ENCODE measurements at regions of chr15 and their contacts with region 1.

Region 1: GRCh38 chr15:44215594-44215993 is 20.5 kb upstream of the FRMD5 start:
- DNase-seq: peak; percentile 94
- H3K4me3 ChIP-seq: no peak overlapping the region
- H3K27ac ChIP-seq: no peak overlapping the region
- H3K4me1 ChIP-seq: peaks cover 17% of the 10 kb centered on the region
- H3K27me3 ChIP-seq: no peaks in the 10 kb centered on the region
- CTCF ChIP-seq: no peak

Region 2: DNA sequence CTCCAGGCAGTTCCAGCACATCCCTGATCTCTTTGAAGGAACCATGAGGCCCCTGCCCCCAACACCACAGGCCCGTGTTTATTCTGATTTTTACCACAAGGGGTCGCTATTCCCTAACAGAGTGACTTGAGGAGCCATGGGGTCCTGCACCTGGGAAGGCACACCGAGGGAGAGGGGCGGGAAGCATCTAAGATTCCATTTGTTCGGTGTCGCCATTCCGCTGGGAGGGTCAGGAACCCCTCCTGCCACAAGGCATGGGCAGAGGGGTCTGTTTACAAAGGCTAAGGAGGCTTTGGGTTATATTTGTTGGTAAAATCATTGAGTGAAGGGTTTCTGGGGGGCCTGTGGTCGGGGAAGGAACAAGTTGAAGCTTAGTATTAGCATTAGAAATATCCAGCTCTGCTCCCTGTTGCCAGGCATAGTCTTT is 311.7 kb before region 1 on chr15:
- CTCF ChIA-PET with region 1: no interaction called
- dilution Hi-C with region 1: loop called (anchors 5 kb)
- in situ Hi-C with region 1: loop called (anchors 5 to 10 kb)
- intact Hi-C with region 1: loop called (anchors 1 kb)
- DNase-seq: peak; percentile 36
- H3K4me3 ChIP-seq: no peak overlapping the region
- H3K27ac ChIP-seq: no peak overlapping the region
- H3K4me1 ChIP-seq: no peaks in the 10 kb centered on the region
- H3K27me3 ChIP-seq: no peaks in the 10 kb centered on the region
- CTCF ChIP-seq: peak; percentile 67 to 84

Region 3: DNA sequence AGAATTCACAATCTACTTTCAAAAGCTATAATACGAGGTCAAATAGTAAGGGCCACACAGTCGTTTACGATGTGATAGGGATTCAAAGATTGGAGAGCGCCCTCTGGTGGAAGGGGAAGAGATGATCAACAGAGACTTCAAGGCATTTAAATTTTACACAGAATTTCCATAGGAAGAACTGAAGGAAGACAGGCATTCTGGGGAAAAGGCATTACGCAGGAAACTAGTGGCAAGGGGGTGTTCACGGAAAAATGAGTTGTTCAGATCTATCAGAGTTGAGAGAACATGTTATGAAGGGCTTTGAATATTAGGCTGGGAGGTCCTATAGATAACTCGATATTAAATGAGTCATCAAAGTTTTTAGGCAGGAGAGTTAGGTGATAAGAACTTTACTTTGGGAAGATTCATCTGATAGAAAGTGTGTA is 149.3 kb before region 1 on chr15:
- CTCF ChIA-PET with region 1: no interaction called
- dilution Hi-C with region 1: no loop called
- in situ Hi-C with region 1: no loop called
- intact Hi-C with region 1: loop called (anchors 1 kb)
- DNase-seq: peak; percentile 65
- H3K4me3 ChIP-seq: no peak overlapping the region
- H3K27ac ChIP-seq: peak overlapping the region; percentile 31
- H3K4me1 ChIP-seq: peaks cover 9% of the 10 kb centered on the region
- H3K27me3 ChIP-seq: no peaks in the 10 kb centered on the region
- CTCF ChIP-seq: peak; percentile 72 to 80

Region 4: DNA sequence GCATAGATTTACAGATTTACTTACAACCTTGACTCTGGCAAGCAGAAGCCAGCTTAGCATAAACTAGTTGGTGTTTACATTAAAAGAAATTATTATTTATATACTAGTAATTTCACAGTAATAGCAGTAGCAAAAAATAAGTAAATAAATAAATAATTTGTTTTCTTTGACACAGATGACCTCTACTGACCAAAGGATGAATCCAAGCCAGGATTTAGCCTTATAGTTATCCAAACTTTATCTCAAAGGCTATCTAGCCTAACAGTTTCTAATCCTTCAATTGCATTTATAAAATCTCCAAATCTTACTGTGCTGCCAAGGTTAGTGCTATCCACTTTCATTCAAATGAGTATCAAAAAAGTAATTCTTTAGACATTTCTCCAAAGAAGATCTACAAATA is 84.8 kb before region 1 on chr15:
- CTCF ChIA-PET with region 1: interaction called, 6 read pairs
- dilution Hi-C with region 1: loop called (anchors 5 kb)
- in situ Hi-C with region 1: no loop called
- intact Hi-C with region 1: loop called (anchors 2 kb)
- DNase-seq: no peak
- H3K4me3 ChIP-seq: no peak overlapping the region
- H3K27ac ChIP-seq: no peak overlapping the region
- H3K4me1 ChIP-seq: no peaks in the 10 kb centered on the region
- H3K27me3 ChIP-seq: no peaks in the 10 kb centered on the region
- CTCF ChIP-seq: peak in 1 of 2 donors; percentile 22

Region 5: DNA sequence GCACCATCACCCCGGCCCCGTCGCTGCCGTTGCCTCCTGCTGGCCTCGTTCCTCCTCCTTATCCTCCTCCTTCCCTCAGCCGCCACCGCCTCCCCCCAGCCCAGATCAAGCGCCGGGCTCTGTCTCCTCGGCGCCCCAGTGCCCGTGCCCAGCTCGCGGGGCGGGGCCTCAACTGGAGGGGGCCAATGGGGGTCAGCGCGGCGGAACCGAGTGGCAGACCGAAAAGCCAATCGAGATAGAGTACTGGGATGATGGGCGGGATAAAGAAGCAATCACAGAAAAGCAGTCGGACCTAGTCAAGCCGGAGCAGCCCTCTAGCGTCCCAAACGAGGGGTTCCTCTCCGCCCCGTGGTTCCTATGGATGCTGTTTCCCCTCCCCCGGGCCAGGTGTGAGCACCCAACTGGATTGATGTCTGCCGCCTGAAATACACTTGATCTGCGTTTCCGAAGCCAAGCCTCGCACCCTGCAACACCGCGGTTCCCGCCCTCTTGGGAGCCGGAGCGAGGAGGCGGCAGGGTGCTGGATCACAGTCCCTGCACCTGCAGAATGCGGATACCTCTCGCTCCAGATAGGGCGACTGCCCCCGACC is 20.3 kb before region 1 on chr15 and contains the start of gene FRMD5:
- CTCF ChIA-PET with region 1: no interaction called
- dilution Hi-C with region 1: no loop called
- in situ Hi-C with region 1: no loop called
- intact Hi-C with region 1: loop called (anchors 1 kb)
- DNase-seq: peak; percentile 99
- H3K4me3 ChIP-seq: peak within 1 kb of the TSS; percentile 75 to 84 (median 76)
- H3K27ac ChIP-seq: peak within 1 kb of the TSS; percentile 82
- H3K4me1 ChIP-seq: peaks cover 19% of the 10 kb centered on the region
- H3K27me3 ChIP-seq: no peaks in the 10 kb centered on the region
- CTCF ChIP-seq: peak in 1 of 2 donors; percentile 51
- total RNA-seq, gene FRMD5: 12.5 to 17.5 TPM

Region 6: GRCh38 chr15:44501768-44502366 is 286.3 kb after region 1 on chr15:
- CTCF ChIA-PET with region 1: no interaction called
- dilution Hi-C with region 1: no loop called
- in situ Hi-C with region 1: no loop called
- intact Hi-C with region 1: loop called (anchors 5 kb)
- DNase-seq: peak; percentile 32
- H3K4me3 ChIP-seq: no peak overlapping the region
- H3K27ac ChIP-seq: no peak overlapping the region
- H3K4me1 ChIP-seq: no peaks in the 10 kb centered on the region
- H3K27me3 ChIP-seq: no peaks in the 10 kb centered on the region
- CTCF ChIP-seq: peak; percentile 54 to 63